ENCODE measurements at regions of chr7 and their contacts with region 1.

Region 1: GRCh38 chr7:129376076-129376777 is 58.0 kb upstream of the STRIP2 start:
- H3K4me3 ChIP-seq: no peak overlapping the region
- H3K27ac ChIP-seq: no peak overlapping the region
- H3K4me1 ChIP-seq: no peaks in the 10 kb centered on the region
- CTCF ChIP-seq: no peak

Region 2: DNA sequence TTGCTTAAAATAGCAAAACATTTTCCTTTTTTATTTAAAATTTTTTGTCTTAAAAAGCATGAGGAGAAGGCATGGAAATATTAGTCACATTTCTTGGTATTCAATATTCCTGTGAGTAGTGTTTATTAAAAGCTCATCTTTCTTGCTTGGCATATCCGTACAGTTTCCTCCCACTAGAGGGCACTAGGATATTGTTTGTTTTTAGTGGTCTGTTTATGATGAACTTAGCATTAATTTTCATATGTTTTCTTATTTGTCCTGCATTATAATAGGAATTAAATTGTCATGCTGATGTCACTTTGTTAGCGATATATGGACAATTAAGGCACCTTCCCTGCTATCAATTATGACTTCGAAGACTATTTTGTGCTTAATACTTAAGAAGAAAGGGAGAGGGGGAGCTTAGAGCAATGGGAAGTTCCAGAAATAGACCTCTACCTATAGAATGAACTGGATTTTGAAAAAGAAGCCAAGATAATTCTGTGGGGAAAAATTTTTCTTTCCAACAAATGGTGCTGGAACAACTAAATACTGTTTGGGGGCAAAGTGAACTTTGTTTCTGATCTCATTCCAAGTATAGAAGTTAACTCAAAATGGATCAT is 33.0 kb before region 1 on chr7:
- CTCF ChIA-PET with region 1: interaction called, 58 read pairs
- POLR2A ChIA-PET with region 1: no interaction called
- H3K4me3 ChIP-seq: no peak overlapping the region
- H3K27ac ChIP-seq: no peak overlapping the region
- H3K4me1 ChIP-seq: no peaks in the 10 kb centered on the region
- CTCF ChIP-seq: peak; percentile 23; the same call in 1 of the 2 replicates

Region 3: DNA sequence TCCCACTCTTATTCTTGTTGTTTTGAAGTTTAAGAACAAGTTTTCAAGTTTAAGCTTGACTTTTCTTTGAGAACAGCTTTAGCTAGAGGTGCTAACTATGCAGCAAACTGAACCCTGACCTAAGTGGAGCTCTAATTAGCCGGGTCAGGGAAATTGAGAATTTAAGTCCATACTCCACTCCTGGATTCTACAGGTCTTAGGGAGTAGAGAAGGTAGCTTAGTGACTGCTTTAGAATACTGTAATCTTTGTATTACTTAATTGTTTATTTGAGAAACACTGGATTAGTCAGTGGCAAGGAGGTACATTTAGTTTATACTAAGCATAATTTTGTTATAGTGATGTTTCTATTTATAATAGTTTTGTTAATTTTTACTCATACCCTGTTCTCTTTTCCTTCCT is 16.6 kb before region 1 on chr7:
- CTCF ChIA-PET with region 1: interaction called, 22 read pairs
- POLR2A ChIA-PET with region 1: no interaction called
- H3K4me3 ChIP-seq: no peak overlapping the region
- H3K27ac ChIP-seq: no peak overlapping the region
- H3K4me1 ChIP-seq: no peaks in the 10 kb centered on the region; the same call in 1 of the 2 replicates
- CTCF ChIP-seq: no peak

Region 4: DNA sequence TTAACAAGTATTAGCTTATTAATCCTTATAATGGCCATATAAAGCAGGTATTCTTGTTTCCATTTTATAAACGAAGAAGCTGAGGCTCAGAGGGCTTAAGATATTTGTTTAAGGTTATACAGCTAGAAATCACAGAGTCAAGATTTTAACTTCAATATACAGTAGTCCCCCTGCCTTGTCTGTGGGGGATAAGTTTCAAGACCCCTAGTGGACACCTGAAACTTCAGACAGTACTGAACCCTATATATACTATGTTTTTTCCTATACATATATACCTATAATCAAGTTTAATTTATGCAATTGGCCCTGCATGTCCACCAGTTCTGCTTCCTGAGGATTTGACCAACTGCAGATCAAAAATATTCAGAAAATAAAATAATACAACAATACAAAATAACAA is 13.6 kb after region 1 on chr7:
- CTCF ChIA-PET with region 1: interaction called, 52 read pairs
- POLR2A ChIA-PET with region 1: no interaction called
- H3K4me3 ChIP-seq: no peak overlapping the region
- H3K27ac ChIP-seq: no peak overlapping the region
- H3K4me1 ChIP-seq: no peaks in the 10 kb centered on the region
- CTCF ChIP-seq: no peak

Region 5: DNA sequence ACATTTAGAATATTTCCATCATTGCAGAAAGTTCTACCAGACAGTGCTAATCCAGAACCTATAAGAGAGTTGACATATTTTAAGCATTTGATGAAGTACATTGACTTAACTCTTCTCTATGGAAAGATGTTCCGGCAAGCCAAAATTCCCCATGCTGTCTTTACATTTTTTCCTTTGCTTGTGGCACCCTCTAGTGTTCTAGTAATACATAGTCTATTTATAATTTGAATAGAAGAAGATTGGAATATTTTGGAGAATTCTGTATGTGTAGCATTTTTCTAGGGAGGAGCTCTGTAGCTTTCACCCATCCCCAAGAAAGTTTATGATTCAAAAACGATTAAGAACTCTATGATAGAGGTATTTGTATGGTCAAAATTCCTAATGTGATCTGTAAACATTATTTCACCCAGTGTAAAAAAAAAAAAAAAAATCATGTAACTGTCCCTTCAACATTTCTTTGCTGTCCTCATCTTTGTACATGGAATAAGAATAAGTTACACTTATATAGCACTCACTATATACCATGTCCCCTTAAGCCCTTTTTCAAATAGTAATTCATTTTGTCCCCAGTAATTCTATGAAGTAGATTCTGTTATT is 268.5 kb after region 1 on chr7:
- CTCF ChIA-PET with region 1: interaction called, 14 read pairs
- POLR2A ChIA-PET with region 1: no interaction called
- H3K4me3 ChIP-seq: no peak overlapping the region
- H3K27ac ChIP-seq: no peak overlapping the region
- H3K4me1 ChIP-seq: 0 out of 2 replicates have a peak, but pooled peaks cover 5% of the 10 kb centered on the region
- CTCF ChIP-seq: no peak

Region 6: DNA sequence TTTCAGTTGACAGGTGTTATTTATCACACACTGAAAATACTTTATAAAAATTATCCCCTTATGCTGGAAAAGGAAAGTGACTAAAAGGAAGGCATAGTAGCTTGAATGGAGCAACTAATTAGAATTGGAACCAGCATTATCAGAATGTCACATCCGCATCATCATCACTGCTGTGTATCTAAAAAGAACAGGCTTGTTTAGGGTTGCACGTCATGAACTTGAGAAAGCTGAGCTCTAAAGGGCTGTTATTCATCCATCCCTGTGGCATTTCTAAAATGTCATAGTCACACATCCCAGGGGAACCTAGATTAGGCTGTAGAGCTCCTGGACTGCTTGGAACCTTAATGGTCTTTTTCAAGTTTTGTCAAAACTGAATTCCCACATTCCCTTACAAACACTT is 748.5 kb after region 1 on chr7:
- CTCF ChIA-PET with region 1: no interaction called
- POLR2A ChIA-PET with region 1: no interaction called
- H3K4me3 ChIP-seq: no peak overlapping the region
- H3K27ac ChIP-seq: no peak overlapping the region
- H3K4me1 ChIP-seq: peaks cover 7% of the 10 kb centered on the region; the same call in 1 of the 2 replicates
- CTCF ChIP-seq: no peak

Measured in HEK293 (cell line).